Upper lobe of right lung (tissue), 1 donor: ENCODE measurements at regions of chr11 and their contacts with region 1.

Region 1: GRCh38 chr11:95150946-95151684 is 61.5 kb downstream of the ENDOD1 start:
- DNase-seq: peak; percentile 94
- ATAC-seq: peak; percentile 92
- H3K4me3 ChIP-seq: peak overlapping the region; percentile 75
- H3K27ac ChIP-seq: peak overlapping the region; percentile 96
- H3K4me1 ChIP-seq: peaks cover 22% of the 10 kb centered on the region
- H3K27me3 ChIP-seq: no peaks in the 10 kb centered on the region
- CTCF ChIP-seq: peak; percentile 69

Region 2: GRCh38 chr11:95076416-95076815 is 74.7 kb before region 1 on chr11:
- intact Hi-C with region 1: loop called (anchors 10 kb)
- DNase-seq: no peak
- ATAC-seq: peak; percentile 82
- H3K4me3 ChIP-seq: no peak overlapping the region
- H3K27ac ChIP-seq: peak overlapping the region; percentile 33
- H3K4me1 ChIP-seq: peaks cover 36% of the 10 kb centered on the region
- H3K27me3 ChIP-seq: no peaks in the 10 kb centered on the region
- CTCF ChIP-seq: no peak

Region 3: DNA sequence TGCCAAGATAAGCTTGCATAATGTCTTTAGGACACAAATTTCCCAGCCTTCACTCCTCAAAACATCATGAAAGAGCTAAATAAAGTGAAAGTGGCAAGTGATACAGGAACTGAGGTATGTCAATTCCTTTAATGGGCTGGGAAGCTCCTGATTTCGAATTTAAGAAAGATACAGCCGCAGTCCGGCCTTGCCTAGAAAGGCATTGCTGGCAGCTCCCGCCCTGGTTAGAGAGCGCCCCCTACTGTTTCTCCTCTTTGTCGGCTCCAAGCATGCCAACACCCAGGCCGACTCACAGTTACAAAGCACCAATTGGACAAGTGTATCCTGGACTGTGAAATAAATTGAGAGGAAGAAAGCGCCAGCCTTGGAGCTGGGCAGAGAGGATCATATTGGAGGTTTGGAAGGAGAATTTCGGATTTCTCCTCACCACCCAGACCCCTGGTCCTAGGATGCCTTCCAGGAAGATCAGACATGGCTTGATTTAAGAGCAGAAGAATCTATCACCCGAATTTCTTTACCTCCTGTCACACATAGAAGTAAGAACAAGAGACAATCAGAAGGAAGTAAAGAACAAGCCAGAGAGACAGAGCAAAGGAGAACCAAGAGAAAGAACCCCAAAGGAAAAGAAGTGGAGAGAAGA is 554.5 kb after region 1 on chr11:
- intact Hi-C with region 1: loop called (anchors 10 kb)
- DNase-seq: peak; percentile 87
- ATAC-seq: peak; percentile 100
- H3K4me3 ChIP-seq: no peak overlapping the region
- H3K27ac ChIP-seq: peak overlapping the region; percentile 43
- H3K4me1 ChIP-seq: peaks cover 32% of the 10 kb centered on the region
- H3K27me3 ChIP-seq: no peaks in the 10 kb centered on the region
- CTCF ChIP-seq: peak; percentile 92

Region 4: DNA sequence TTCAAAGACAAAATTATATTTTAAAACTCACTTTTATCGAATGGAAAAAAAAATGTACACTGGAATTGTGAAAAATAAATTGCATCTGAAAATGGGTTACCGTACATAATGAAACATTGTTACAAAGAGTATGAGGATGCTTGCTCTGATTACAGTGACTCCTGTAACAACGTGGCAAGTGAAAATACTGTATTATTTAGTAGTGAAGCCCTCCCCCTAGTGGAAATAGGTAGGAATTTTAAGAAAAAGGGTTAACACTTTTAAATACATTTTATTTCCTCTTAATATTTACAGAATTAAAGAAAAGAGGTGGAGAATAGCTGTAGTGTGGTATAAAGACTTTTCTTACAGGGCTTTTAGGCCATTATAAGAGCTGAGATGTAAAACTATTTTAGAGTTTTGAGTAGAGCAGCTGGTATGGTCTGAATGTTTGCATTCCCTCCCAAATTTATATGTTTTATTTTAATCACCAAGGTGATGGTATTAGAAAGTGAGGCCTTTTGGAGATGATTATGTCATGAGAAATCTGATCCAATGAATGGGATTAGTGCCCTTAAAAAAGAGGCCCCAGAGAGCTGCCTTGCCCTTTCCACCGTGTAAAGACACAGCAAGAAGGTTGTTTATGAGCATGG is 613.3 kb after region 1 on chr11:
- intact Hi-C with region 1: loop called (anchors 5 kb)
- DNase-seq: no peak
- ATAC-seq: peak; percentile 87
- H3K4me3 ChIP-seq: no peak overlapping the region
- H3K27ac ChIP-seq: no peak overlapping the region
- H3K4me1 ChIP-seq: no peaks in the 10 kb centered on the region
- H3K27me3 ChIP-seq: no peaks in the 10 kb centered on the region
- CTCF ChIP-seq: peak; percentile 71